Motor neuron (in vitro differentiated cells): ENCODE measurements at regions of chr1 and their contacts with region 1.

Region 1: DNA sequence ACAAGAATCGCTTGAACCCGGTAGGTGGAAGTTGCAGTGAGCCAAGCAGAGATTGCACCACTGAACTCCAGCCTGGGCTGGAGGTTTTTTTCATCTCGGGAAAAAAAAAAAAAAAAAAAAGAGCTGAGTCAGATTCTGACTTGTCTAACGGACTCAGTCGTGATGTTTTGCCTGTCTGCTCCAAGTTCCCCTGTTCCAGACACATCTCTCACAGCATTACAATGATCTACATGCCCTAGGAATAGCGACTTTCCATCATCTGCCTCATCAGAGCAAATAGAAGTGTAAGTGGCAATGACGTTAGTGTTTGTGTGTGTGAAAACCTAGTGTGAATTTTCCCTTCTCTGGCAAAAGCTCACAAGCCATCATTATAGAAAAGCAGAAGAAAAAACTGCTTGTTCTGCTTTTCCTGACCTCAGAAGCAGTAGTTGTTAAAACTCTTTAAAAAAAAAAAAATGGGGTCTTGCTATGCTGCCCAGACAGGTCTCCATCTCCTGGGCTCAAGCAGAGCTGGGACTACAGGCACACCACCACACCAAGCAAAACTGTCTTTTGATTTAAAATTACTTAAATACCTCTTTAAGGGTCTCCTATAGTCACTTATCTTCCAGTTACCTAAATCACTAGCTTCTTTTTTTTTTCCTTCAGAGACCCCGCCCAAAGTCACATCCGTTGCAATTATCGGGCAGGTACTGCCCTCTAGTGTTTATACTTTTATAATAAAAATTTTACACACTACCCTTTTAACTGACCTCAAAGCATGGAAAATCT is 37.3 kb downstream of the PLEKHO1 start:
- ATAC-seq: peak in 5 of 8 experiments; percentile 33 to 86 (median 59)
- H3K4me3 ChIP-seq: no peak overlapping the region
- H3K27ac ChIP-seq: no peak overlapping the region
- H3K4me1 ChIP-seq: peaks cover 1 to 5% of the 10 kb centered on the region in 2 donors

Region 2: GRCh38 chr1:149927503-149928387 is 259.2 kb before region 1 on chr1 and contains the start of gene SF3B4:
- in situ Hi-C with region 1: loop called in 1 of 9 experiments (anchors 25 kb)
- ATAC-seq: peak; percentile 96 to 99 (median 97)
- H3K4me3 ChIP-seq: peak within 1 kb of the TSS; percentile 77 to 98 (median 89)
- H3K27ac ChIP-seq: peak within 1 kb of the TSS; percentile 96
- H3K4me1 ChIP-seq: peaks cover 15 to 20% of the 10 kb centered on the region in 2 donors
- total RNA-seq, gene SF3B4: 17.0 to 47.8 (median 28.1) TPM

Region 3: GRCh38 chr1:150072959-150073358 is 114.0 kb before region 1 on chr1:
- in situ Hi-C with region 1: loop called in 3 of 9 experiments (anchors 10 to 25 kb)
- ATAC-seq: peak in 3 of 8 experiments; percentile 46 to 56 (median 52)
- H3K4me3 ChIP-seq: no peak overlapping the region
- H3K27ac ChIP-seq: no peak overlapping the region
- H3K4me1 ChIP-seq: peaks cover 6 to 9% of the 10 kb centered on the region in 2 donors

Region 4: GRCh38 chr1:150089846-150090520 is 97.0 kb before region 1 on chr1:
- in situ Hi-C with region 1: loop called in 2 of 9 experiments (anchors 25 kb)
- ATAC-seq: no peak
- H3K4me3 ChIP-seq: no peak overlapping the region
- H3K27ac ChIP-seq: no peak overlapping the region
- H3K4me1 ChIP-seq: no peaks in the 10 kb centered on the region